ENCODE measurements at regions of chr4 and their contacts with region 1.

Region 1: DNA sequence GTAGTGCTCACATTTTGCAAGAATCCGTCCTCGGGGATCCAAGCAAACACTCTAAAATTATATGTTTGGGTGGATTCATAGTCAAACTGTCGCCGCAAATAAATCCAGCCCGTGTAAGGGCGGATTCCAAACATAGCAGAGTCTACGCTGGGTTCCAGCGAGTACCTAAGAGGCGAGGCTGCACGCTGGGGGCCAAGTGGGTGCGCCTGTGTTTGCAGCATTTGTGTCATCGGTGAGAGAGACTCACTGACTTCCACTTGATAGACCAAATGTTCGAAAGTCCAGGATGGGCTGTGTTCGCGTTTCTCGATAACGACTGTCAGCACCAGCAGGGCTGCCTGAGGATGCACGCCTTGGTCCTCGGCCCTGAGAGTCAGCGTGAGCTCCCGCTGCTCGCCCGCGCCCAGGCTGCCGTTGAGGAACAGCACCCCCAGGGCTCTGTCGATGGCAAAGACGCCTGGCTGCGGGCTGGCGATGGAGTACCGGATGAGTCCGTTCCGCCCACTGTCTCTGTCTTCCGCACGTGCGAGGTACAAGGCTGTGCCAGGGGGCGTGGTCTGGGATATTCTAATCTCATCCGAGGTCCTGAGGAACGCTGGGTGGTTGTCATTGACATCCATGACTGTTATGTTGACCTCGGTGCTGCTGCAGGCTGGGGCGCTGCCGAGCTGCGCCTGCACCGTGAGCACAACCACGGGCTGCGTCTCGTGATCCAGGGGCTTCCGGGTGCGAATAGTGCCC is 158.7 kb downstream of the DCHS2 start:
- DNase-seq: peak; percentile 82
- ATAC-seq: peak; percentile 95
- H3K4me3 Mint-ChIP-seq: peak overlapping the region; percentile 68
- H3K27ac Mint-ChIP-seq: peak overlapping the region; percentile 61
- H3K4me1 Mint-ChIP-seq: peaks cover 11% of the 10 kb centered on the region
- H3K27me3 Mint-ChIP-seq: peaks cover 19% of the 10 kb centered on the region

Region 2: DNA sequence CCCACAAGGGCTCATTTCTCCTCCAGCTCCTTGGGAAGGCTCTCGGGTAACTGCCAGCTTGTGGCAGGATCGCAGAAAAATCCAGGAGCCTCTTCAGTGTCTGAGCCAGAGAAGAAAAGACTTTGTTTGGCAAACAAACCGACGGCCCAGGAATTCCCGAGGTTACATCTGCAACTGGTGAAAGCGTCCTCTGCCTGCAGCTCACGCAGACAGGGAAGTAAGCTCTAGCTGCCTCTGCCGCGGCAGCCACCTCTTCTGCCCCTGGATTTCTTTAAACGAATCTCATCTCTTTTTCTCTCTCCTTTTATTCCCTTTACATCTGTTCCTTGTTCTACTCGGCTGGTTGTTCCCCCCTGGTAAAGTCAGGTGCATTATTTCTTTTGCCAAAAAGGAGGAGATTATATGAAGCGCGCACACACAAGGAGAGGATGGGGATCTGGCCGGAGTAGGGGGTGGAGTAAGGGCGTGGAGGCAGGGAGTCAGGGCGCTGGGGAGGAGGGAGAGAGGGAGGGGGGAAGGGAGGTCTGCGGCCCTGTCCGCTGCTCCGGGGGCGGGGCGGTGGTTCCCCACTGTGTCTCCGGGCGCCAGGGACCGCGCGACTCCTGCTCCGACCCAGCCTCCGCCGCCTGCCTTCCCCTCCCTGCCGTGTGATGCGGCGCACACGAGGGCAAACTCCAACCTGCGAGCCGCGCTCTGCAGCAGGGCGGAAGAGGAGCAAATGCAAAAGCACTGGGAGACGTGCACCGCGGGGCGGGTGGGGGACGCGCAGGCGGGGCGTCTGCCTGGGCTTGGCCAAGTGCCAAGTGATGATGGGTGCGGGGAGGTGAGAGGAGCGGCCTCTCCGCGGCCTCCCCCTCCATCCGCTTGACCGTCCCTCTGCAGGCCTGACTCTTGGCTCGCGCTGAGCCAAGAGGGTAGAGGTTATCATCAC is 158.8 kb after region 1 on chr4 and contains the start of gene DCHS2:
- CTCF ChIA-PET with region 1: no interaction called
- POLR2A ChIA-PET with region 1: no interaction called
- intact Hi-C with region 1: loop called in 1 of 2 experiments (anchors 5 kb)
- DNase-seq: peak; percentile 55
- ATAC-seq: peak; percentile 71
- H3K4me3 Mint-ChIP-seq: peak within 1 kb of the TSS; percentile 67
- H3K27ac Mint-ChIP-seq: no peak within 1 kb of the TSS
- H3K4me1 Mint-ChIP-seq: peaks cover 18% of the 10 kb centered on the region
- H3K27me3 Mint-ChIP-seq: peaks cover 55% of the 10 kb centered on the region
- total RNA-seq, gene DCHS2: 0.05 to 0.14 TPM

Region 3: DNA sequence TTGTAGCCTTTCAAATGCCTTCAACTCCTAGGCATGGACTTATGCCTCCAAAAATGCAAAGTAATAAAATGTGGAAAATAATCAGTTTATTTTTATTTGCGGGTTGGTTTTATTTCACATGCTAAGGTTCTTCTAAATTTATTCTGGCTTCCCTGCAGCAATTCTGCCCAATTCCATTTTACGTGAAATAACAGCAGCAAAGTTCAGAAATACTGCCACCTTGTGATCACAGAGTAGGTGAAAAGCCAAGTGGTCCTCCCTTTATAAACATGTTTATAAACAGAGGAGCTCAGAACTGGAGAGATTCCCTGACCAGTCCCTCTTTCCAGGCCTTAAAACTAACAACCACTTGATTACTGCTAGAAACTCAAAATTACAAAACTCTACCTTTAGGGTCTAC is 173.4 kb after region 1 on chr4:
- CTCF ChIA-PET with region 1: interaction called, 7 read pairs
- POLR2A ChIA-PET with region 1: no interaction called
- intact Hi-C with region 1: loop called (anchors 1 to 2 kb)
- DNase-seq: no peak
- ATAC-seq: no peak
- H3K4me3 Mint-ChIP-seq: no peak overlapping the region
- H3K27ac Mint-ChIP-seq: no peak overlapping the region
- H3K4me1 Mint-ChIP-seq: no peaks in the 10 kb centered on the region
- H3K27me3 Mint-ChIP-seq: peaks cover 19% of the 10 kb centered on the region

Region 4: DNA sequence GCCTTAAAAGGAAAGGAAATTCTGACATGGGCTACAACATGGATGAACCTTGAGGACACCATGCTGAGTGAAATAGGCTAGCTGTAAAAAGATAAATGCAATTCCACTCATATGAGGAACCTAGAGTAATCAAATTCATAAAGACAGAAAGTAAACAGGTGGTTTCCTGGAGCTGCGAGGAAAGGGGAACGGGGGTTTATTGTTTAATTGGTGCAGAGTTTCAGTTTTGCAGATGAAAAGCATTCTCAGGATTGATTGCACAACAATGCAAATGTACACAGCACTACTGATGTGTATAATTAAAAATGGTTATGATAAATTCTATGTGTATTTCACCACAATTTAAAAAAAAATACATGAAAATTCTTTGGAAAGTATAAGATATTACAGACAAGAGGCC is 193.3 kb after region 1 on chr4:
- CTCF ChIA-PET with region 1: no interaction called
- POLR2A ChIA-PET with region 1: no interaction called
- intact Hi-C with region 1: no loop called
- DNase-seq: no peak
- ATAC-seq: no peak
- H3K4me3 Mint-ChIP-seq: no peak overlapping the region
- H3K27ac Mint-ChIP-seq: no peak overlapping the region
- H3K4me1 Mint-ChIP-seq: no peaks in the 10 kb centered on the region
- H3K27me3 Mint-ChIP-seq: peaks cover 23% of the 10 kb centered on the region

Region 5: GRCh38 chr4:154618708-154619315 is 286.0 kb after region 1 on chr4:
- CTCF ChIA-PET with region 1: no interaction called
- POLR2A ChIA-PET with region 1: no interaction called
- intact Hi-C with region 1: loop called (anchors 5 to 10 kb)
- DNase-seq: peak; percentile 78
- ATAC-seq: peak; percentile 79
- H3K4me3 Mint-ChIP-seq: no peak overlapping the region
- H3K27ac Mint-ChIP-seq: no peak overlapping the region
- H3K4me1 Mint-ChIP-seq: peaks cover 5% of the 10 kb centered on the region
- H3K27me3 Mint-ChIP-seq: peaks cover 6% of the 10 kb centered on the region